ENCODE measurements at regions of chr1 and their contacts with region 1.

Region 1: DNA sequence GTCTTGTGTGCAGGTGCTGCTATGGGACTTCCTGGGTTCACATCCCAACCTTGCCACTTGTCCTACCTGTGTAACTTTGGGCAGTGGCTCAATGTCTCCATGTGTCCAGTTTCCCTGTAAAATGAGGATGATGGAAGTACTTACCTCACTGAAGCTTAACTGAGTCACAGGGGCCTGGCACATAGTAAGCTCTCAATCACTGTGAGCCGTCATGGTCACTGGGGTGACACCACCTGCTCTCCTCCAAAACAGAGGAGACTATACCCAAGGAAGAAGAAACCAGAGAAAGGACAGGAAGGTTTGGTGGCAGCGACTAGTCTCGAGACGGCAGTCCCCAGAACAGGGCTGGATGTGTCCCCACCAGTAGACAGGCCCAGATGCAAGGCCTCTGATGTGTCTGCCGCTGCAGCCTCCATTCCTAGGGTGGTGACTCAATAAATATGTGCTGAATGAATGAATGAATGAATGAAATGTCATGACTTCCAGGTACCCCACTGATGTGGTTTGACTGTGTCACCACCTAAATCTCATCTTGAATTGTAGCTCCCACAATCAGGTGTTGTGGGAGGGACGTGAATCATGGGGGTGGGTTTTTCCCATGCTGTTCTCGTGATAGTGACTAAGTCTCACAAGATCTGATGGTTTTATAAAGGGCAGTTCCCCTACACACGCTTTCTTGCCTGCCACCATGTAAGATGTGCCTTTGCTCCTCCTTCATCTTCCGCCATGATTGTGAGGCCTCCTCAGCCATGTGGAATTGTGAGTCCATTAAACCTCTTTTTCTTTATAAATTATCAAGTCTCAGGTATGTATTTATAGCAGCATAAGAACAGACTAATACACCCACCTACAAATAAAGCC is 13.0 kb upstream of the LRP8 start:
- DNase-seq: no peak
- H3K4me3 Mint-ChIP-seq: no peak overlapping the region
- H3K27ac Mint-ChIP-seq: peak overlapping the region; percentile 39
- H3K4me1 Mint-ChIP-seq: peaks cover 8% of the 10 kb centered on the region
- H3K27me3 Mint-ChIP-seq: no peaks in the 10 kb centered on the region

Region 2: DNA sequence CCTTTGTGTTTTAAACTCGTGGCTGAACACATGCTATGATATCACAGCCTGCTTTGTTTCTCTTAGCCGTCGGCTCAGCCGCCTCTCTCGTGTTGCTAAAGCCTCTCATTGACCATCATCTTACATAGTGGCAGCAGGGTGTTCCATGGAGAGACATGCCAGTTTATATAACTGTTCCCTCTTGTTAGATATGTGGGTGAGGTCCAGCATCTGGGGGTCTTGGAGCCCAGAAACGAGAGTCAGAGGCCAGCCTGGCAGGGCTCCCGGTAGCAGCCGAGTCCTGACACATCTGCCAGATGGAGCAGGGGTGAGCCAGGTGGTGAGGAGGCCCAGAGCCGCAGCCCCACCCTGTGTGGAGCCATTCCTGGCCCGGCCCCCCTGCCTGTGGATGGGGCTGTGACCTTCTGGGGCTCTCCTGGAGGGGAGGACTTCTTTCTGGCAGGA is 267.0 kb before region 1 on chr1:
- intact Hi-C with region 1: no loop called
- DNase-seq: no peak
- H3K4me3 Mint-ChIP-seq: no peak overlapping the region
- H3K27ac Mint-ChIP-seq: no peak overlapping the region
- H3K4me1 Mint-ChIP-seq: no peaks in the 10 kb centered on the region
- H3K27me3 Mint-ChIP-seq: no peaks in the 10 kb centered on the region

Region 3: DNA sequence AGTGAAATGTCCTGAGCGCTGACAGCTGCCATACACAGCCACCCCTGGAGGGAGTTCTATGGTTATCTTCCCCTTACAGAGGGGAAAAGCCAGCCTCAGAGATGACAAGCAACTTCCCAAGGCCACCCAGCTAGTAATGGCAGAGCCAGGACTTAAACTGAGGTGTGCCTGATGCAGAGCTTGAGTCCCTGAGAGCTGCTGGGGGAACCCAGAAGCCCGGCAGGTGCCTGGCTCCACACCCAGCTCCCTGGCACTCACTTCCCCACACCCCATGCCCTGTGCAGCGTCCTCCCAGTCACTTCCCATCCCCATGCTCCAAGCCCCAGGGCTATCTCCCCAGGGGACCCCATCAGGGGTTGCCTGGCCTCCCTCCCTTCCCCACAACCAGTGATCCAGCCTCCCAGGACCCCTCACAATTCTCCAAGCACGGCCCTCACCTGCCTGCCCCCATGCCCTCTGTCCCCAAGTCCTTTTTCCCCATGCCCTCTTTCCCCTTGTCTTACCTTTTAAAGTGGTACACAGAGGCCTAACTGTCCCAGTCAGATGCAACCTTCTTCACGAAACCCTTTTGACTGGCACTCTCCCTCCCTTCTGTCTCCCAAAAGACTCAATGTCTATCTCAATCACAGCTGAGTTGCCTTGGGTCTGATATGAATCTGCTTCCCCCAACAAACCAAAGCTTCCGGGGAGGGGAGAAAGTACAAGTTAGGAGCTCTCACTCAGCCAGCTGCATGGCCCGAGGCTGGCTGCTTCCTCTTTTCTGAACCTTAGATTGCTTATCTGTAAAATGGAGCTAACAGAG is 26.8 kb after region 1 on chr1:
- intact Hi-C with region 1: loop called (anchors 1 kb)
- DNase-seq: peak; percentile 84
- H3K4me3 Mint-ChIP-seq: peak overlapping the region; percentile 83
- H3K27ac Mint-ChIP-seq: peak overlapping the region; percentile 84
- H3K4me1 Mint-ChIP-seq: peaks cover 16% of the 10 kb centered on the region
- H3K27me3 Mint-ChIP-seq: peaks cover 2% of the 10 kb centered on the region